Dorsolateral prefrontal cortex (tissue), 120 donors: ENCODE measurements at regions of chr20 and their contacts with region 1.

Region 1: GRCh38 chr20:21571841-21572690 is 58.2 kb upstream of the NKX2-2 start:
- DNase-seq: peak in 2 of 10 donors; percentile 10 to 35
- H3K4me3 ChIP-seq: peak overlapping the region in 26 of 59 donors; percentile 4 to 45 (median 25)
- H3K27ac ChIP-seq: peak overlapping the region in 7 of 59 donors; percentile 21 to 58 (median 37)
- H3K27me3 ChIP-seq: peaks cover 0 to 4% (median 0%) of the 10 kb centered on the region in 45 donors
- CTCF ChIP-seq: peak; percentile 67 to 96 (median 88)

Region 2: GRCh38 chr20:21450572-21450971 is 121.5 kb before region 1 on chr20:
- intact Hi-C with region 1: no loop called
- DNase-seq: no peak
- H3K4me3 ChIP-seq: no peak overlapping the region
- H3K27ac ChIP-seq: no peak overlapping the region
- H3K27me3 ChIP-seq: peaks cover 0 to 7% (median 0%) of the 10 kb centered on the region in 45 donors
- CTCF ChIP-seq: no peak

Region 3: GRCh38 chr20:21520702-21521595 is 51.1 kb before region 1 on chr20:
- intact Hi-C with region 1: loop called (anchors 2 to 5 kb)
- DNase-seq: peak in 4 of 10 donors; percentile 62 to 77 (median 70)
- H3K4me3 ChIP-seq: peak overlapping the region; percentile 33 to 83 (median 66)
- H3K27ac ChIP-seq: peak overlapping the region in 58 of 59 donors; percentile 20 to 98 (median 86)
- H3K27me3 ChIP-seq: peaks cover 0 to 98% (median 79%) of the 10 kb centered on the region in 45 donors
- CTCF ChIP-seq: peak in 55 of 56 donors; percentile 18 to 79 (median 64)

Region 4: DNA sequence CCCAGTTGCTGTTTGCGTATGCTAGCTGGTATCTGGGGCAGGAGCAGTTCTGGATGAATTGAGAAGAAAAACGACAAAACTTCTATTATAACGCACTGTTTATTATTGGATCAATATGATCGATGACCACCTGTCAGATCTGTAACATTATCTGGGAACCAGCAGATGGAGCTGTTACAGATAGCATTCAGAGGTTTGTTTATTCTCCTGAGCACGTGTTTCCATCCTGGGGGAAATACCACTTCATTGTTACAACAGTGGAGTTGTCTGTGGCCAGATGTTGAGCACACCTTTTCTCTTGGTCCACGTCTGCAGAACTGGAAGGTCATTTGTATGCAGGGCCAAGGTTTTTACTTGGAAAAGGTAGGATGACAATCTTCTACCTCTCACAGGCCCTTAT is 42.2 kb before region 1 on chr20:
- intact Hi-C with region 1: loop called (anchors 1 to 5 kb)
- DNase-seq: no peak
- H3K4me3 ChIP-seq: no peak overlapping the region
- H3K27ac ChIP-seq: peak overlapping the region in 13 of 59 donors; percentile 0 to 53 (median 38)
- H3K27me3 ChIP-seq: peaks cover 0 to 38% (median 0%) of the 10 kb centered on the region in 45 donors
- CTCF ChIP-seq: peak in 55 of 56 donors; percentile 29 to 77 (median 60)

Region 5: DNA sequence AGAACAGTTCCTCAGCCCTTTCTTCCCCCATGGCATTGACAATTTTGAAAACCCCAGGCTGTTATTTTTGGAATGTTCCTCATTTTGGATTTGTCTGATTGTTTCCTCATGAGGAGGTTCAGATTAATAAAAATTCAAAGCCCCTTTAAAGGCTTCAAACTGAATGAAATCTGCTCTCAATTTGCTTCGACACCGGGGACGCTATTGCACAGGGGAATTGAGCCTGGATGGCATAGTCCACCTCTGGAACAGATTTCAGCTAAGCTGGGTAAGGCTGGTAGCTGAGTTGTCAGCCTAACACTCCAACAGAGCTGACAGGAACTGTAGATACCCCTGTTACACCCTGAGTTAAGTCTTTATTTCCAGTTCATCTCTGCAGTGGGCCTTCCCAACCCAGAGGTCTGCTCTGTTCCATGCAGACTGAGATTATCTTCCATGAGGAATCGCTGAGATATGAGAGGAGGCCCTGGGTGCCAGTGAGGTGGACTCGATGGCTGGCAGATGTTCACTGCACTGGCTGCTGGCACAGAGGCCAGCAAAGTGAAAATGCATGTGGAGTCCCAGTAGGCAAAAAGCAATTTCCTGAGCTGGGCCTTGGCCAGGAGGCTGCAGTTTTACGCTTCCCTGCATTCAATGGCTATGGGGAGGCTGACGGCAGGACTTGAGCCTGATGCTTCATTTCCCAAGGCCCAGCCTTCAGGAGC is 60.1 kb after region 1 on chr20:
- intact Hi-C with region 1: no loop called
- DNase-seq: no peak
- H3K4me3 ChIP-seq: no peak overlapping the region
- H3K27ac ChIP-seq: no peak overlapping the region
- H3K27me3 ChIP-seq: peaks cover 0 to 15% (median 0%) of the 10 kb centered on the region in 45 donors
- CTCF ChIP-seq: no peak

Region 6: DNA sequence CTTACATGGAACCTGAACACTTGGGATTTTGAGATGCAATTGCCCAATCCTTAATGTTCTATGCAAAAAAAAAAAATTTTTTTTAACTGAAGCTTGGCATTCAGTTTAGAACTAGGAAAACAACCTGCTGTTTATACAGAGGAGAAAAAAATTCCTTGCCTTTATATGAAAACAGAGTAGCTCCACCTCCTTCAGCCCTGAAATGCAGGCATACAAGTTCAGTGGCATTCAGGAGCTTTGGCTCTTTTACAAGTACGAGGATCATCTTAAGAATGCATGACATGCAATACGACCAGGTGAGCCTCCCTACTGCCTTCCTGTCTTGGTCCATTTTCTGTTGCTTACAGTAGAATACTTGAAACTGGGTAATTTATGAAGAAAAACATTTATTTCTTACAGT is 153.8 kb after region 1 on chr20:
- intact Hi-C with region 1: no loop called
- DNase-seq: no peak
- H3K4me3 ChIP-seq: no peak overlapping the region
- H3K27ac ChIP-seq: no peak overlapping the region
- H3K27me3 ChIP-seq: peaks cover 0 to 11% (median 0%) of the 10 kb centered on the region in 45 donors
- CTCF ChIP-seq: no peak